ENCODE measurements at regions of chr14 and their contacts with region 1.

Region 1: DNA sequence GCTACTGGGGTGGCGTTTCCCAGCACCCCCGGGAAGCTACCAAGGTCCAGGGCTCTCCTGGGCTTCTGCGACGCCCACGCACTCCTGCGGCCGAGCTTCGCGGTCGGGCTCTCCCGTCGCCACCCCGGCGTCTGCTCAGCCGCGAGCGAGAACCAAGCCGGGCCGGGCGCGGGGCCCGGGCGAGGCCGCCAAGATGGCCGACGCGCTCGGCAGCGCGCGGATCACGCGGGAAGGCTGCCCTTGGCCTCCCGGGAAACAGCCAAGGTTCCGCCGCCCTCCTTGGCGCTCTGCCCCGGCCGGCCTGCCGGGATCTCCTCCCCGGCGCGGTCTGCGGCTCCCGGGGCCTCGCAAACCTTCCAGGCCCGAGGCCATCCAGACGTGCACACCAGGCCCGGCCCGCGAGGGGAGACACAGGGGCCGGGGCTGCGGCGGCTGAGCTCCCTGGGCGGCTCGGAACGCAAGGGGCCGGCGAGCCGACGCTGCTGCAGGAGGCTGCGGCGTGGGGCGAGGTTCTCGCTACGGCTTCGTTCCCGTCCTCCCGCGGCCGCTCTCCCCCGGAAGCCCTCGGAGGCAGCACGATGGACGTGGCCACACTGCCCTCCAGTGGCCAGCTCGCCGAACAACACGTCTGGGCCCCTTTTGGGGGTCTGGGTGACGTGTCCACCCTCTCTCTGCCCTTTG is 23.5 kb upstream of the ZFP36L1 start:
- DNase-seq: peak; percentile 93
- H3K4me3 Mint-ChIP-seq: peak overlapping the region; percentile 77
- H3K27ac Mint-ChIP-seq: peak overlapping the region; percentile 93
- H3K4me1 Mint-ChIP-seq: peaks cover 70% of the 10 kb centered on the region
- H3K27me3 Mint-ChIP-seq: no peaks in the 10 kb centered on the region

Region 2: DNA sequence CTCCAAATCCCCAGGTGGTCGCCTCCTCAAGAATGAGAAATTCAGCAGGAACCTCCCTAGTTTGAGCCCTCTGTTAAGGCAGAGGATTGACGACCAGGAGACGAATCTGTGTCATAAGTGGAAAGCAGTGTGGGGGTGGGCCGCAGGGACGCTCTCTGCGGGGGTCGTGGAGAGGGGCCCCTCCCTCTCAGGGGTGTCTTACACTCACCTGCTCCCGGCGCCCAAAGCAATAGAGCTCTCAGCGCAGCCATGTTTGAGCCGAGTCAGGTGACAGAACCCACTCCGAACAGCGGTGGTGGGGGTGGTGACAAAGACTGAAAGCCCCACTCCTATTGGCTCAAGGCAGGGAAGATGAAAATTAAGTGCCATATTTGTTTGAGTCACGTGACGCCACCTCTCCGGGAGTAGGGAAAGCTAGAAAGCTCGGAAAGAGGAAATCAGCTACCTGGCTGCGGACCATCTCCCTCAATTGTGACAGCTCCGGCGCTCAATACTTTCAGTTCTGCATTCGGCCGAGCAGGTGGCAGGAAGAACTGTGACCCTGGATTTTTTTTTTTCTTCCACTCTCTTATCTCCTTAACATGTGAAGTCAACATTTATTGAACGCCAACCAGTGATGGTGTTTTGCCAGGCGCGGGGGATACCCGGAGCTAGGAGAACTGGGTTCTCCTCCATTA is 999.9 kb before region 1 on chr14 and contains the start of gene ZFYVE26:
- CTCF ChIA-PET with region 1: no interaction called
- POLR2A ChIA-PET with region 1: interaction called, 3 read pairs
- intact Hi-C with region 1: loop called (anchors 10 kb)
- DNase-seq: peak; percentile 95
- H3K4me3 Mint-ChIP-seq: peak within 1 kb of the TSS; percentile 93
- H3K27ac Mint-ChIP-seq: peak within 1 kb of the TSS; percentile 90
- H3K4me1 Mint-ChIP-seq: peaks cover 50% of the 10 kb centered on the region
- H3K27me3 Mint-ChIP-seq: no peaks in the 10 kb centered on the region
- total RNA-seq, gene ZFYVE26: 12.5 to 12.6 TPM

Region 3: GRCh38 chr14:68248481-68249255 is 567.7 kb before region 1 on chr14:
- CTCF ChIA-PET with region 1: interaction called, 142 read pairs
- POLR2A ChIA-PET with region 1: interaction called, 3 read pairs
- intact Hi-C with region 1: loop called (anchors 1 kb)
- DNase-seq: no peak
- H3K4me3 Mint-ChIP-seq: no peak overlapping the region
- H3K27ac Mint-ChIP-seq: no peak overlapping the region
- H3K4me1 Mint-ChIP-seq: peaks cover 36% of the 10 kb centered on the region
- H3K27me3 Mint-ChIP-seq: no peaks in the 10 kb centered on the region

Region 4: DNA sequence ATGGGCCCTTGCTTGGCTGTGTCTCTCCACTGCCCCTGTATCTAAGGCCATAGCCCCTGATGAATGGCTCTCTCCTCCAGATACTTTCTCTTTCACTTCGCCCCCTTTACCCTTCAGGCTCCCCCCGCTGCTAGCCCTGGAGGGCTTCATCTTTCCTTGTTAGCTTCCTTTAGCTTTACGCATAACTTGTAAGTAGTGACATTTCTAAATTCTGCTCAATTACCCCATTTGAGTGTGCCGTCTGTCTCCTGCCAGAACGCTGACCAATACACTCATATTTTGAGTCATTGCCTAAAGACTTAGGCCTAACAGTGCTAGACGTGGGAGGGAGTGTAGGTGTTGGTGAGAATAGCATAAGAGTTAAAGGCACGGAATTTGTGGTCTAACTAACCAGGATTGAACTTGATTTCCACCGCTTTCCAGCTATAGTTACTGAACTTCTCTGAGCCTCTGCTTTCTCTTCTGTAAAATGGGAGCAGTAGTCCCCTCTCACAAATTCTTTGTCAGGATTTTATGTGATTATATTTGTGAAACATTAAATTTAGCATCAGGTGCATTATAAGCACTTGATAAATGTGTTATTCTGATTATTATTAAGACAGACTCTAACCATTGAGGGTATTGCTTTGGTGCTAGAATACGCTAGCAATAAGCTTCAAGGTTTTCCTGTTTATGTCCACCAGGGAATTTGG is 152.9 kb before region 1 on chr14:
- CTCF ChIA-PET with region 1: interaction called, 23 read pairs
- POLR2A ChIA-PET with region 1: no interaction called
- intact Hi-C with region 1: no loop called
- DNase-seq: peak; percentile 72
- H3K4me3 Mint-ChIP-seq: peak overlapping the region; percentile 24
- H3K27ac Mint-ChIP-seq: peak overlapping the region; percentile 71
- H3K4me1 Mint-ChIP-seq: peaks cover 47% of the 10 kb centered on the region
- H3K27me3 Mint-ChIP-seq: no peaks in the 10 kb centered on the region

Region 5: DNA sequence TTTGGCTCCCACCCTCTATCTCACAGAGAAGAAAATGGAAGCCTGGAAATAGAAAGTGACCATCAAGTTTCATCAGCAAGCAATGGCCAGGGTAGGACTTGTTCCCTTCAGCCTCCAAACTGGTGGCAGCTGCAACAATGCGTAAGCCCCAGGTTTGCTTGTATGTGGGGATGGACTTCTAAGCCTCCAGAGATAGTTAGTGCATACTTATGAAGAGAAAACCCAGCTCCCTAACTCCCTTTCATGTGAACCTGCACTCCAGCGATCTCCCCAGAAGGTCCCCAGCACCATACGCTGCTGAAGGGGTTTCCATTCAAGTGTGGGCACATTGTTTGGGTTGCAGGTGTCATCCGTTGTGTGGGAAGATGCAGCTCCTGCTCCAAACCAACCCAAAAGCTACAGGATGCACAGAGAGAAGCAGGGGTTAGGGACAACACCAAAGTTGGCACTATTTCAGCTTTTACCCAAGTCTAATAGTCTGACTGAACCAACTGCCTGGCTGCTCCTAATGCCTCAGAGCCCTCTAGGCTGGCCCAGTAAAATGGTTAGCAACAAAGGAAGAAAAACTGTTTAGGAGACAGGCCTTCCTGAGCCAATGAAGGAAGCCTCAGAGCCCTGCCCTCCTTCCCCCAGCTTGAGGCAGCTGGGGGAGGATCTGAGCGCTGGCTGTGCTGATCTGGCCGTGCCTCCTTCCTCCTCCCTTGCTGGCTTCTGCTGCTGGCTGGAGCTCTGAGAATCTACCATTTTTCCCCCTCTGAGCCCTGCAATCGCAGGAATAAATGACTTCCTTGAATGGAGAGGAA is 35.8 kb before region 1 on chr14:
- CTCF ChIA-PET with region 1: interaction called, 218 read pairs
- POLR2A ChIA-PET with region 1: interaction called, 8 read pairs
- intact Hi-C with region 1: no loop called
- DNase-seq: peak; percentile 55
- H3K4me3 Mint-ChIP-seq: peak overlapping the region; percentile 71
- H3K27ac Mint-ChIP-seq: peak overlapping the region; percentile 80
- H3K4me1 Mint-ChIP-seq: peaks cover 78% of the 10 kb centered on the region
- H3K27me3 Mint-ChIP-seq: no peaks in the 10 kb centered on the region

Region 6: GRCh38 chr14:68843471-68844209 is 27.2 kb after region 1 on chr14:
- CTCF ChIA-PET with region 1: interaction called, 107 read pairs
- POLR2A ChIA-PET with region 1: no interaction called
- intact Hi-C with region 1: loop called (anchors 1 kb)
- DNase-seq: peak; percentile 84
- H3K4me3 Mint-ChIP-seq: peak overlapping the region; percentile 2
- H3K27ac Mint-ChIP-seq: no peak overlapping the region
- H3K4me1 Mint-ChIP-seq: peaks cover 19% of the 10 kb centered on the region
- H3K27me3 Mint-ChIP-seq: peaks cover 2% of the 10 kb centered on the region

Measured in activated CD4-positive, alpha-beta memory T cell treated with anti-CD3 and anti-CD28 coated beads for 36 hours (primary cell).